Caco-2 (cell line): ENCODE measurements at regions of chr1 and their contacts with region 1.

Region 1: DNA sequence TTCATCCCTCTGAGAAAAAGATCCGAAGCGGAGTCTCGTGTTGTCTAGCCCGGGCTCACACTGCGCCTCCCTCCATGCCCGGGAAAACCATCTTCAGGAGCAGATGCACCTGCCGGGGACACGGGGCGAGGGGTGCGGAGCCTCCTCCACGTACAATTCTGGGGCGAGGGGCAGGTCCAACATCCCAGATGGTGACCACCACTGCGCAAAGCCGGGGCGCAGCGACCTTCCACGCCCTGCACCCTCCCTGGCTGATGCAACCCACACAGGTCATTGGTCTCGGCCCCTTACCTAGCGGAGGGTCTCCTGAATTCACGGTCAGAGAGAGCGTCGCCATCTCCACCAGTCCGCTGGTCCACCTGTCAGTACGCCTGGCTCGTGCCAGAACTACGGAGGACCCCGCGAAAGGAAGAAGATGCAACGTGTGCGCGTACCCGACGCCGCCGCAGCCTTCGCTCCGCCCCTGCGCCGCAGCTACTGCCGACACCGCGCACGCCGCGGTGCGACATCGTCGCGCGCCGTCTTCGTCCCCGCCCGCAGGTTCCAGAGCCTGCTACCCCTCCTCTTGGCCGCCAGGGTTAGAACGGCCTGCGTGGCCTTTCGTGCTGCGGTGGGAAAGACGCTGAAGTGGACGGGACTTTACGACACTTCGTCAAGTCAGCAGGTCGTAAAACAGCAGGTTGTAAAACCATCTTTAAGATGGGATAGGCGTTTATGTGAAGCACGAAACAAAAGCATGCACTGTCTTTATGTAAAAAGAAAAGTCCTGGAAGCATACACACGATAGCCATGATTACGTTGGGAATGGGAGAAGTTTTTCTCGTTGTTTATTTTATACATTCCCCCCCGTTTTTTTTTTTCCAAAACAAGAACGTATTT is at the start of gene EPRS1:
- DNase-seq: peak; percentile 96 to 97
- H3K4me3 ChIP-seq: peak within 1 kb of the TSS; percentile 95
- H3K4me3 Mint-ChIP-seq: peak within 1 kb of the TSS; percentile 89
- H3K27ac Mint-ChIP-seq: peak within 1 kb of the TSS; percentile 95
- H3K4me1 ChIP-seq: peaks cover 14% of the 10 kb centered on the region
- H3K4me1 Mint-ChIP-seq: peaks cover 8% of the 10 kb centered on the region
- H3K27me3 ChIP-seq: no peaks in the 10 kb centered on the region
- H3K27me3 Mint-ChIP-seq: no peaks in the 10 kb centered on the region
- CTCF ChIP-seq: peak; percentile 67 to 81
- total RNA-seq, gene EPRS1: 199 and 215 TPM in 2 replicates

Region 2: GRCh38 chr1:220089650-220090556 is 43.6 kb after region 1 on chr1 and contains the start of gene BPNT1:
- CTCF ChIA-PET with region 1: interaction called, 5 read pairs
- POLR2A ChIA-PET with region 1: interaction called, 7 read pairs
- intact Hi-C with region 1: loop called (anchors 1 kb)
- DNase-seq: peak; percentile 96 to 97
- H3K4me3 ChIP-seq: peak within 1 kb of the TSS; percentile 69
- H3K4me3 Mint-ChIP-seq: peak within 1 kb of the TSS; percentile 100
- H3K27ac Mint-ChIP-seq: peak within 1 kb of the TSS; percentile 94
- H3K4me1 ChIP-seq: 0 out of 2 replicates have a peak, but pooled peaks cover 5% of the 10 kb centered on the region
- H3K4me1 Mint-ChIP-seq: no peaks in the 10 kb centered on the region
- H3K27me3 ChIP-seq: no peaks in the 10 kb centered on the region
- H3K27me3 Mint-ChIP-seq: no peaks in the 10 kb centered on the region
- CTCF ChIP-seq: no peak
- total RNA-seq, gene BPNT1: 25.0 and 29.4 TPM in 2 replicates